Aorta (tissue), 5 donors: ENCODE measurements at regions of chr2 and their contacts with region 1.

Region 1: GRCh38 chr2:78676921-78677696 is 348.4 kb upstream of the REG3G start:
- DNase-seq: no peak
- ATAC-seq: no peak
- H3K4me3 ChIP-seq: no peak overlapping the region
- H3K27ac ChIP-seq: no peak overlapping the region
- H3K4me1 ChIP-seq: no peaks in the 10 kb centered on the region
- H3K27me3 ChIP-seq: no peaks in the 10 kb centered on the region

Region 2: DNA sequence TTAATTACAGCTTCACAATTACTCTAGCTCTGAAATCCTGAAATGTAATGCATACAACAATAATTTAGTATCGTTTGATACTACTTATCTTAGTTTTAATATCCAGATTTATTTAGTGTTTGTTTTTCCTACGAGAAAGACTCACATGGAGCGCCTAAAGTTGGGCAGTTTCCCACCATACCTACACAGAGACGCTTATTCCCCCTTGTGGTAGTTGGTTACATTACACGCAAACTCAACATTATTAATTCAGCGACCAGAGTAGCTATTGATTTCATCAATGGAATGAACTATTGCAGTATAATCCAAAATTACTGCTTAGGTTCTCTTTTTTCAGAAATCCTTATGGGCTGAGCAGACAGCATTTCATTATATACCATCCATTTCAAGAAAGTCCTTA is 184.4 kb after region 1 on chr2:
- intact Hi-C with region 1: loop called in 1 of 2 experiments (anchors 10 kb)
- DNase-seq: no peak
- ATAC-seq: no peak
- H3K4me3 ChIP-seq: no peak overlapping the region
- H3K27ac ChIP-seq: no peak overlapping the region
- H3K4me1 ChIP-seq: no peaks in the 10 kb centered on the region
- H3K27me3 ChIP-seq: no peaks in the 10 kb centered on the region

Region 3: DNA sequence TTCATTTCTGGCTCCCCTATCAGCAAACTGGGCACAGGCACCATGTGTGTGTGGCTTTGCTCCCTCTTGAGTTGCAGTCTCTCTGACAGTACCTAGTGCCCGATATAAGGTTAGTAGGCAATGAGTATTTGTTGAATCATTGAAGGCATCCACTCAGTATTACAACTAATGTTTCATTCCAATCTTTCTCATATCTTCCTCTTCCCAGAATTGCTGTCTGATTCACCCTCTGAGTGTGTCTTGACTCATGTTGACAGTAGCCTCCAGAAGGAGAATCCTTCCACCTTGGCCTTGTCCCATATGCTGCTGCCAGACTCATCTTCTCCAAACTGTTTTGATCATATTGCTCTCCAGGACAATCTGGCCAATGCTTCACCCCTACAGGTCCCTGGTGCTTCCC is 1424.9 kb after region 1 on chr2:
- intact Hi-C with region 1: no loop called
- DNase-seq: no peak
- ATAC-seq: no peak
- H3K4me3 ChIP-seq: no peak overlapping the region
- H3K27ac ChIP-seq: no peak overlapping the region
- H3K4me1 ChIP-seq: no peaks in the 10 kb centered on the region
- H3K27me3 ChIP-seq: no peaks in the 10 kb centered on the region